HepG2 (cell line): ENCODE measurements at regions of chr11 and their contacts with region 1.

Region 1: GRCh38 chr11:128884703-128885338 is 6.3 kb upstream of the KCNJ5 start:
- DNase-seq: peak; percentile 54
- ATAC-seq: peak; percentile 90
- H3K4me3 ChIP-seq: no peak overlapping the region
- H3K27ac ChIP-seq: no peak overlapping the region
- H3K4me1 ChIP-seq: no peaks in the 10 kb centered on the region
- H3K27me3 ChIP-seq: peaks cover 3 to 49% of the 10 kb centered on the region in 2 experiments; a peak in 4 of 5 replicates
- CTCF ChIP-seq: peak; percentile 86
- EP300 ChIP-seq: no peak
- POLR2A ChIP-seq: no peak
- RAD21 ChIP-seq: peak; percentile 77

Region 2: DNA sequence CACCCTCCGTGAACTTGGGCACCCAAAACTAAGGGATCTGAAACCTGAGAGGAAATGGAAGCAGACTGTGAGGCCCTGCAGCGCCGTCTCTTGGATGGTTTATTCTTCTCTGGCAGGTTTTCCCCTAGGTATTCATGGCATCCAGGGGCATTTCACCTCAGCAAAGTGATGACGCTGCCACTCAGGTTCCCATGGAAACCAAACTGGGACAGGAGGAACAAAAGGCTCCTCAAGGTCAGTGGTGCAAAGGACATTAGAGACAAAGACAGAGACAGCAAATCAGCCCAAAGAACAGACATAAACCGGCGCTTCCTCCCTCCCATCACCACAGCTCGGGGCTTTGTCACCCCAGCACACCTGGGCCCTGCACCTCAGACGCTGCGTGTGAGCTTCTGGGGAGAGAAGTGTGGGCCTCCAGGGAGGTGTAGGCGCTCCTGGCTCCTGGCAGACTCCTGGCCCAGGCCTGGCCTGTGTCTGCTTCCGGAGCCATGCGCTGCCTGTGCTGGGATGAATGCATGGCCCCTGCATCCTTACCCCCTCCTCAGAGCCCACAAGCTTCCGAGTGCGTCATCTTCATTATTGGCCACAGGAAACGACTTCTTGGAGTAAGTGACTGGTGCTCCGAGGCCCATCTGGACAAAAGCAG is 51.9 kb after region 1 on chr11:
- CTCF ChIA-PET with region 1: no interaction called
- POLR2A ChIA-PET with region 1: no interaction called
- in situ Hi-C with region 1: no loop called
- intact Hi-C with region 1: no loop called
- DNase-seq: peak; percentile 58
- ATAC-seq: peak; percentile 26; the same call in 2 of the 3 replicates
- H3K4me3 ChIP-seq: no peak overlapping the region
- H3K27ac ChIP-seq: no peak overlapping the region
- H3K4me1 ChIP-seq: no peaks in the 10 kb centered on the region
- H3K27me3 ChIP-seq: peaks cover 8 to 55% of the 10 kb centered on the region in 2 experiments; a peak in 3 of 5 replicates
- CTCF ChIP-seq: no peak
- EP300 ChIP-seq: no peak
- POLR2A ChIP-seq: no peak
- RAD21 ChIP-seq: no peak

Region 3: DNA sequence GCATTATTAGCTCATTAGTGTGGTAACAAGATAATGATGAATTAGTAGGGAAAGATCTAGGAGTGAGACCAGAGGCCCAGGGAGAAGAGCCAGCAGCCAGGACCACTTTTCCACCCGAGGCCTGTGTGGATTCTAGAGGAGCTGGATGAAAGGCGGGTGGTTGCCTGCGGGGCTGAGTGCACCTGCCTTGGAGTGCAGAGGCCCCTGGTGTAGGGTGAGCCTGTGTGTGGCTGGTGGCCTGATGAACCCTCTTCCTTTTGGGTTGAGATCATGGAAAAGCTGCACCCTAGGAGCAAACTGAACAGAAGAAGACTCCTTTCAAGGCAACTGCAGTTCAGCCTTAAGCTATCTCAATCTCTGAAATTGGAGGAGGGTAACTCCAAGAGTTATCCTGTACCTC is 63.8 kb after region 1 on chr11:
- CTCF ChIA-PET with region 1: interaction called, 4 read pairs
- POLR2A ChIA-PET with region 1: no interaction called
- in situ Hi-C with region 1: no loop called
- intact Hi-C with region 1: loop called (anchors 2 kb)
- DNase-seq: no peak
- ATAC-seq: peak; percentile 85
- H3K4me3 ChIP-seq: no peak overlapping the region
- H3K27ac ChIP-seq: no peak overlapping the region
- H3K4me1 ChIP-seq: no peaks in the 10 kb centered on the region
- H3K27me3 ChIP-seq: peaks cover 0 to 3% of the 10 kb centered on the region in 2 experiments; a peak in 1 of 5 replicates
- CTCF ChIP-seq: peak; percentile 46
- EP300 ChIP-seq: no peak
- POLR2A ChIP-seq: no peak
- RAD21 ChIP-seq: no peak

Region 4: GRCh38 chr11:128956401-128957201 is 71.8 kb after region 1 on chr11:
- CTCF ChIA-PET with region 1: interaction called, 38 read pairs
- POLR2A ChIA-PET with region 1: no interaction called
- in situ Hi-C with region 1: loop called (anchors 5 kb)
- intact Hi-C with region 1: loop called (anchors 1 kb)
- DNase-seq: peak; percentile 74
- ATAC-seq: peak; percentile 91
- H3K4me3 ChIP-seq: no peak overlapping the region
- H3K27ac ChIP-seq: no peak overlapping the region
- H3K4me1 ChIP-seq: no peaks in the 10 kb centered on the region
- H3K27me3 ChIP-seq: no peaks in the 10 kb centered on the region
- CTCF ChIP-seq: peak; percentile 82
- EP300 ChIP-seq: no peak
- POLR2A ChIP-seq: no peak
- RAD21 ChIP-seq: peak; percentile 62; the same call in 1 of the 2 replicates

Region 5: DNA sequence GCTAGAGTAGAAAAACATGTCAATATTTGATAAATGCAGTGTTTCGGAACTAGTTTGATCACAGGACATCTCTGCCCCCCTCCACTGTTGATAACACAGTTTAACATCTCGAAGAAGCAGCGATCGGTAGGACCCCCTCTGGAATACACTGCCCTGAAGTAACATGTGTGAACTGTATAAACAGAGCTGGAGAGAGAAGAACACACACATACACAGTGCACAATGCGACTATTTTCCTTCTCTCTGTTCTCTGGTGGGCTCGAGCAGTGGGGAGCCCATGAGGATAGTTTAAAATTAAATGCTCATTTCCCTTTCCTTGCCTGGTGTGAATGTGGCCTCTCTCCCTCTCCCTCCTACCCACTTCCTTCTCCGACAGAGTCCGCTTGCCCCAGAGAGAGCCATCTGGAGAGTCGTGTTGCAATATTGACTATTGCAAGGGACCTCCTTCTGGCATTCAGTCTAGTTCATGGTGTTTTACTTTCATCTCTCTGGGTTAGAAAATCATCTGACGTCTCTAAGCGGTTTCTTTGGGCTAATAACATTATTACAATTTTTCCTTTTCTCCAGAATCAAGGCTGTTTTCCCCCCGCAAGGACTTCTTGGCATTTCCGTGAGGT is 439.2 kb after region 1 on chr11:
- CTCF ChIA-PET with region 1: no interaction called
- POLR2A ChIA-PET with region 1: no interaction called
- in situ Hi-C with region 1: loop called (anchors 10 kb)
- intact Hi-C with region 1: no loop called
- DNase-seq: peak; percentile 37
- ATAC-seq: peak; percentile 58
- H3K4me3 ChIP-seq: peak overlapping the region; percentile 54 to 61 (median 55)
- H3K27ac ChIP-seq: no peak overlapping the region
- H3K4me1 ChIP-seq: peaks cover 65% of the 10 kb centered on the region
- H3K27me3 ChIP-seq: no peaks in the 10 kb centered on the region; a peak in 1 of 5 replicates
- CTCF ChIP-seq: no peak
- EP300 ChIP-seq: no peak
- POLR2A ChIP-seq: no peak
- RAD21 ChIP-seq: no peak

Region 6: GRCh38 chr11:129695575-129696308 is 810.9 kb after region 1 on chr11:
- CTCF ChIA-PET with region 1: interaction called, 3 read pairs
- POLR2A ChIA-PET with region 1: no interaction called
- in situ Hi-C with region 1: loop called (anchors 25 kb)
- intact Hi-C with region 1: no loop called
- DNase-seq: peak; percentile 46
- ATAC-seq: peak; percentile 97
- H3K4me3 ChIP-seq: peak overlapping the region; percentile 11 to 69 (median 46)
- H3K27ac ChIP-seq: no peak overlapping the region
- H3K4me1 ChIP-seq: peaks cover 5% of the 10 kb centered on the region; the same call in 1 of the 2 replicates
- H3K27me3 ChIP-seq: peaks cover 2 to 45% of the 10 kb centered on the region in 2 experiments; a peak in 4 of 5 replicates
- CTCF ChIP-seq: peak; percentile 88
- EP300 ChIP-seq: no peak
- POLR2A ChIP-seq: no peak
- RAD21 ChIP-seq: 0 out of 2 replicates have a peak, but pooled peaks have one; percentile 41

Region 7: DNA sequence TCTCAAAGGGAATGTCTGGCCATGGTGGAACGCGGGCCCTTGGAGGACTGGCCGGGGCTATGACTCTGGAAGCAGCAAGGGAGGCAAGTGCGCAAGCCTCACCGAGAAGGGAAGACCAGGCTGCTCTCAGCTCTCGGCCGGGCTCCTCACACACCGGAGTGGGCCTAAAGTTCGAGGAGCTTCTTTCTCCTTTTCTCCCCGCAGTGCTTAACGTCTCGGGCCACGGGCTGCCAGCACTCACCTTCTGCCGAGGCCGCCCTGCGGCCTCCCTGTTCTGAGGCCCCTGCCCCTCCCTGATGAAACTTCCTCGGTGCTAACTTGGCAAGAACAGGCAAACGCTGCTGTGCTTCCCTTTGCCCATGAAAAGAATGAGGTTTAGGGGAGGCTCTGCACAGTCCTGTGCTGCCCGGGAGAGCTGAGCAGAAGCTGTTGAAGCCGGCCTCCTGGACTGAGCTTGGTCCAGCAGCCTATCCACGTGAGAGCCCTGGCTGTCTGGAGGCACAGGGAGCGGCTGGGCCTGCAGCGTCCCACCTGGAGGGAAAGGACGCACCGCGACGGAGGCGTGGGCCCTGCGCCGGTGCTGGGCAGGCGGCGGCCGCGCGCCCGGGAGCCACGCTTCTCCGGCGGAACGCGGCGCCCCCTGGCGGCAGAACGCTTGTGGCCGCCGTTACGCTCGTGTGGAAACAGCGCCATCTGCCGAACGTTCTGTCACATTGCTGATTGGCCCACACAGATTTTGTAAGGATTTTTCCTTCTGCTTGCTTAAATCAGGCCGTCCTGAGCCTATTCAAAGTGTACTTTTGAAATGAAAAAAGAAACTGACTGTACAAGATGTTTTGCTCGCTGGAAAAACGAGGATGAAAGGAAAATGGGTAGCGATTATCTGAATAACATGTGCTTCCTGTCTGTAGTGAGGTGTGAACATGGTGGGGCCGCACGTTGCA is 865.8 kb after region 1 on chr11:
- CTCF ChIA-PET with region 1: interaction called, 10 read pairs
- POLR2A ChIA-PET with region 1: no interaction called
- in situ Hi-C with region 1: no loop called
- intact Hi-C with region 1: no loop called
- DNase-seq: peak; percentile 56
- ATAC-seq: peak; percentile 98
- H3K4me3 ChIP-seq: peak overlapping the region; percentile 11 to 62 (median 34); a peak in 2 of 6 replicates
- H3K27ac ChIP-seq: no peak overlapping the region
- H3K4me1 ChIP-seq: peaks cover 6% of the 10 kb centered on the region
- H3K27me3 ChIP-seq: peaks cover 2 to 25% of the 10 kb centered on the region in 2 experiments; a peak in 3 of 5 replicates
- CTCF ChIP-seq: peak; percentile 96
- EP300 ChIP-seq: no peak
- POLR2A ChIP-seq: no peak
- RAD21 ChIP-seq: peak; percentile 97